Mucosa of descending colon (tissue), 3 donors: ENCODE measurements at regions of chr19 and their contacts with region 1.

Region 1: DNA sequence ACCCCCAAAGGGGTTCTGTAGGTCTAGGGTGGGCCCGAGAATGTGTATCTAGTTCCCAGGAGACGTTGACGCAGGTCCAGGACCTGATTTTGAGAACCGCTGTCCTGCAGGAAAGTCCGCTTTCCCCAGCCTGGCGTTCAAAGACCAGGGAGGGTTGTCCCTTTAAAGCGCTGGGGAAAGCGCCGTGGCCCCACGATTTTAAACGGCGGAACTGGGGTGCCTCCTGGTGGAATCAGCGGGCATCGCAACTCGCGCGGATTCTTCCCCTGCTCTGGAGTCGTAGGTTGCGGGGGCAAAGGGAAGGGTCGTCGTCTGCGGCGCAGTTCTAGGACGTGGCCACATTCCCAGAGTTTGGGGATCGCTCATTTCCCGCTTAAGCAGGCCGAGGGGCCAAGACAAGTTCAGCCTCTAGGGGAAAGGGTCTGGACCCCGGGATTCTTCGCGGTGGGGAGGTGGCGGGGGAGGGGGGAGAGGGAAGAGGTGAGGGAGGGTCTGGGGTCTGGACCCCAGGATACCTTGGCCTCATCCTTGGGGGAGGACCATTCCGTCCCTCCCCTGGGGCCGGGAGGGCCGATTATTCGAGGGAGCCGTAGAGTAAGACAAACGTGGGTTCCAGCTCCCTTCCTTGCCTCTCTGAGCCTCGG is 7.7 kb downstream of the PNMA8B start:
- DNase-seq: peak in 2 of 3 donors; percentile 84 to 85
- ATAC-seq: peak; percentile 83
- H3K4me3 ChIP-seq: no peak overlapping the region
- H3K4me1 ChIP-seq: peaks cover 3% of the 10 kb centered on the region
- CTCF ChIP-seq: peak; percentile 84

Region 2: DNA sequence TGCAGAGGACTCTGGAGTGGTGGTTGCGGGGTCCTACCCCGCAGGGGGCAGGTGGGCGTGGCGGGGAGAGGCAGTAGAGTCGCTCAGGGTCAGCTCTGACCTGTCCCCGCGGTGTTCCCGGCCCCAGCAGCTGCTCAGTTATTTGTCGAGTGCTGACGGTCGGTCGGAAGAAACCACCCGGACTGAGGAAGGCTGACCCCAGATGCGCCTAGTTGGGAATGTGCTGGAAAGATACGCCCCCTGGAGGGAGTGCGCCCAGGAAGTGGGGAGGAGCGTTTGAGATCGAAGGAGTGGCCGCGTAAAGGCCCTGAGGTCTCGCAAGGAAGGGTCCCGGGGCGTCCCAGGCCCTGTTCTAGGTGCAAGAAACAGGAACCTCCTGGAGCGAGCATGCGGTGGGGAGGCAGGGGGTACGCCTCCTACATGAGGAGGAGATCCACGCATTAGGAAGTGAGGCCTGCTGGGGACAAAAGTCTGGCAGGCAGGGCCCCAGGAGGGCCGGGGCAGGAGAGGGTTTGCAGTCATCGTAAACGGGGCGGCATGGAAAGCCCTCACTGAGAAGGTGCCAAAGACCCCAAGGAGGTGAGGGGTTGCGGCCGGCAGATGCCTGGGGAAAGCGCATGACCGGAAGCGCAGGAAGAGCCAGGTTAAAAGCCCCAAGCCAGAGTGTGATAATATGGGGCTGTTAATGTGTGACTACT is 83.7 kb before region 1 on chr19:
- intact Hi-C with region 1: loop called (anchors 5 kb)
- DNase-seq: peak; percentile 68 to 78 (median 76)
- ATAC-seq: peak; percentile 87
- H3K4me3 ChIP-seq: peak overlapping the region; percentile 14
- H3K4me1 ChIP-seq: no peaks in the 10 kb centered on the region
- CTCF ChIP-seq: no peak